A673 (cell line): ENCODE measurements at regions of chr12 and their contacts with region 1.

Region 1: GRCh38 chr12:10361084-10361483 is 28.8 kb downstream of the KLRK1 start:
- DNase-seq: peak; percentile 78
- H3K4me3 ChIP-seq: no peak overlapping the region
- H3K27ac ChIP-seq: no peak overlapping the region
- H3K4me1 ChIP-seq: peaks cover 27% of the 10 kb centered on the region
- H3K27me3 ChIP-seq: no peaks in the 10 kb centered on the region
- CTCF ChIP-seq: no peak

Region 2: DNA sequence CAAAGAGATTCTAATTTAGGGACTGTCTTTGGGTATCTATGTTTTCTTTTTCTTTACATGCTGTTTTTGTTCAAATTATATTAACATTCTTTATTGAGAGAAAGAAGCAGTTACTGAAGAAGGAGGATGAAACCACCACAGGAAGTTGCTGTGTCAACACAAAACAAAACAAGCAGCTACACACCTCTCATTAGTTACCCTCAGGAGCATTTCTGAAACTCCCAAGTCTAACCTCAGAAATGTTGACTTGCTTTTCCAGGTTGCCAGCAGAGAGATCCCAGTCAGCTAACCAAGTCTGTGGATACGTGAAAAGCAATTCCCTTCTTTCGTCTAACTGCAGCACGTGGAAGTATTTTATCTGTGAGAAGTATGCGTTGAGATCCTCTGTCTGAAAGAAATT is 295.8 kb before region 1 on chr12:
- CTCF ChIA-PET with region 1: no interaction called
- POLR2A ChIA-PET with region 1: interaction called, 10 read pairs
- intact Hi-C with region 1: no loop called
- DNase-seq: no peak
- H3K4me3 ChIP-seq: no peak overlapping the region
- H3K27ac ChIP-seq: no peak overlapping the region
- H3K4me1 ChIP-seq: peaks cover 40% of the 10 kb centered on the region
- H3K27me3 ChIP-seq: no peaks in the 10 kb centered on the region
- CTCF ChIP-seq: no peak